ENCODE measurements at regions of chr10 and their contacts with region 1.

Region 1: GRCh38 chr10:78657163-78657861 is 411.5 kb upstream of the ZMIZ1 start:
- DNase-seq: peak; percentile 50
- H3K4me3 ChIP-seq: no peak overlapping the region
- H3K27ac ChIP-seq: no peak overlapping the region
- H3K4me1 ChIP-seq: peaks cover 4% of the 10 kb centered on the region
- H3K27me3 ChIP-seq: peaks cover 17% of the 10 kb centered on the region in 2 experiments
- CTCF ChIP-seq: peak; percentile 61 to 92
- POLR2A ChIP-seq: no peak

Region 2: GRCh38 chr10:78211561-78212051 is 445.7 kb before region 1 on chr10:
- CTCF ChIA-PET with region 1: interaction called, 29 read pairs
- POLR2A ChIA-PET with region 1: no interaction called
- dilution Hi-C with region 1: no loop called
- intact Hi-C with region 1: loop called (anchors 1 kb)
- DNase-seq: peak; percentile 55
- H3K4me3 ChIP-seq: no peak overlapping the region
- H3K27ac ChIP-seq: no peak overlapping the region
- H3K4me1 ChIP-seq: no peaks in the 10 kb centered on the region
- H3K27me3 ChIP-seq: peaks cover 4 to 5% of the 10 kb centered on the region in 2 experiments
- CTCF ChIP-seq: peak; percentile 49 to 65
- POLR2A ChIP-seq: no peak

Region 3: GRCh38 chr10:78407009-78407711 is 250.2 kb before region 1 on chr10:
- CTCF ChIA-PET with region 1: interaction called, 10 read pairs
- POLR2A ChIA-PET with region 1: no interaction called
- dilution Hi-C with region 1: no loop called
- intact Hi-C with region 1: no loop called
- DNase-seq: peak; percentile 80
- H3K4me3 ChIP-seq: peak overlapping the region in 1 of 3 experiments; percentile 19
- H3K27ac ChIP-seq: no peak overlapping the region
- H3K4me1 ChIP-seq: no peaks in the 10 kb centered on the region
- H3K27me3 ChIP-seq: peaks cover 0 to 4% of the 10 kb centered on the region in 2 experiments
- CTCF ChIP-seq: no peak
- POLR2A ChIP-seq: no peak

Region 4: DNA sequence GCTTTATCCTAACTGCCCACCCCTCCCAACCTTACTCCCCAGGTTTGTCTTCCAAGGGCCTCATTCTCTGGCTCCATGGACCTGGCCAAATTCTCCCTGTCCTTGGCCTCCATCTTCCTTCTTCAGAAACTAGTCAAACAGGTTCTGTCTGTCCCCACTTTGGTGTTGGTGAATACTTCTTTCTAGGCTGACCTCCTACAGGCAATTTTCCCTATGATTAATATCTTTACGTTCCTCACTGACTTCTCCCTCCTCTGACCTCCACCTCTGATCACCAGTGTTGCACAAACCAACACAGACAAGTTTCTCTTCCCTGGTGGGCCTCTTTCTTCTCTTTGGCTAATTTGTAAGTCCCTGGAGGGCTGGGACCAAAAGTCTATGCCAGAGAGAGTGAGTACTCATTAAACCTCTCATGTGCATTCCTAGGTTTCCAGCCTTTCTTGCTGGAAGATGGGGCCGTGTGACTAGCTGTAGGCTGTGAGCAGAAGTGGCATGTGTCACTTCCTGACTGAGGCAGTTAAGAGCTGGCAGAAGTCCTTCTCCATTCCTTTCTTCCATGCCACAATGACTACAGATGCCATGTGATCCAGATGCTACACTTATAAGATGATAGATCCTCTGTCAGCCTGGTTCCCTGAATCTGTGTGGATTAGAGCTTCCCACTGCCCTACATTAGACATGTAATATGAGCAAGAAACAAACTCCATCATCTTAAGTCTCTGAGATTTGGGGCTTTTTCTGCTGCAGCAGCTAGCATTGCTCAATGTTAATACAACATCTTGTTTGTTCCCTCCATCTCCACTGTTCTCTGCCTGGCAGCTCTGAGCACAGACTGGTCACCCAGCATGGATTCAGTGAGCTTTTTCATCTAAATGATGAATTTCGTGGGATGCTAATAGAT is 241.0 kb before region 1 on chr10:
- CTCF ChIA-PET with region 1: interaction called, 3 read pairs
- POLR2A ChIA-PET with region 1: no interaction called
- dilution Hi-C with region 1: no loop called
- intact Hi-C with region 1: loop called (anchors 5 kb)
- DNase-seq: peak; percentile 45
- H3K4me3 ChIP-seq: no peak overlapping the region
- H3K27ac ChIP-seq: no peak overlapping the region
- H3K4me1 ChIP-seq: peaks cover 8% of the 10 kb centered on the region
- H3K27me3 ChIP-seq: no peaks in the 10 kb centered on the region
- CTCF ChIP-seq: no peak
- POLR2A ChIP-seq: no peak

Region 5: DNA sequence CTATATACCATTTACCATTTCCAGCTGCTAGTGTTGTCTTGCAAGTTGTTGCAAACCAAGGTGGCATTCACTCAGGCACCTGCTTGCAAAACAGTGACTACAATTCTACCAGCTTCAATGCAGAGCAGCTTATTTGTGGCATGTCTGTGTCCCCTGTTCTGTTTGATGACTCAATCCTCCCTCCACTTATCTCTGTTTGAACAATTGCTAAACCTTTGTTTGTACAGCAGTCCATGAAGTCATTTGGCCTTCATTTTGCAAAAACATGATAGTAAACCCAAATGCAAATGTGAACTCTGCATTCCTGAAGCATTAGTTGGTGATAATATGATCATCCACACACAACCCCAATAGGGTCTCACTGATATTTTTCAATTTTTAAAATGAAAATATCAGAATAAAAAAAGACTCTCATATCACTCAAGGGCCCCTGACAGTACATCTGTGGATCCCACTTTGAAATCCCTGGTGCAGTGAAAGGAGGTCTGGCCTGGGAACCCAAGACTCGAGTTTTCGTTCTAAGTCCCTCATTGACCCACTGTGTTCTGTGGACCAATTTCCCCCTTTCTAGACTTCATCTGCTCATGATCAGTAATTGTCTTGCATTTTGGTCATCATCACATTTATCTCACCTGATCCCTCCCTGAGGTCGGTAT is 198.2 kb before region 1 on chr10:
- CTCF ChIA-PET with region 1: interaction called, 11 read pairs
- POLR2A ChIA-PET with region 1: no interaction called
- dilution Hi-C with region 1: no loop called
- intact Hi-C with region 1: no loop called
- DNase-seq: peak; percentile 98
- H3K4me3 ChIP-seq: no peak overlapping the region
- H3K27ac ChIP-seq: peak overlapping the region; percentile 99
- H3K4me1 ChIP-seq: peaks cover 43% of the 10 kb centered on the region
- H3K27me3 ChIP-seq: no peaks in the 10 kb centered on the region
- CTCF ChIP-seq: no peak
- POLR2A ChIP-seq: peak; percentile 87

Region 6: DNA sequence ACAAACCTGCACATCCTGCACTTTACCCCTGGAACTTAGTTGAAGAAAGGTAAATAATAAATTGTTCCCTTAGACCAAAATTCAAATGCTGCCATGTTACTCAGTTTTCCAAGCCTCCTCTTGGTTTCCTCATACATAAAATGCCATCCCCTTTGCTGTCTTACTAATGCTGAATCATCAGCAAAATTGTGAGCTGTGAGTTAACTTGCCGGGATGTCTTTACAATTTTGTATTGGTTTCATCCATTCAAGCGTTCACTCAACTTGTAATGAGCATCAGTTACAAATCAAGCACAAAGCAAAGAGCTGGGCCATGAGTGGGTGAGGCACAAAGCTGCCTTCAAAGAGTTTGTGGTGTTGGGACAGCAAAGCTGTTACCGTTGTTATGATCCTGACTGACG is 15.6 kb after region 1 on chr10:
- CTCF ChIA-PET with region 1: interaction called, 24 read pairs
- POLR2A ChIA-PET with region 1: no interaction called
- dilution Hi-C with region 1: no loop called
- intact Hi-C with region 1: no loop called
- DNase-seq: no peak
- H3K4me3 ChIP-seq: no peak overlapping the region
- H3K27ac ChIP-seq: no peak overlapping the region
- H3K4me1 ChIP-seq: no peaks in the 10 kb centered on the region
- H3K27me3 ChIP-seq: no peaks in the 10 kb centered on the region
- CTCF ChIP-seq: no peak
- POLR2A ChIP-seq: no peak

Measured in endothelial cell of umbilical vein (primary cell).